A673 (cell line): ENCODE measurements at regions of chr10 and their contacts with region 1.

Region 1: DNA sequence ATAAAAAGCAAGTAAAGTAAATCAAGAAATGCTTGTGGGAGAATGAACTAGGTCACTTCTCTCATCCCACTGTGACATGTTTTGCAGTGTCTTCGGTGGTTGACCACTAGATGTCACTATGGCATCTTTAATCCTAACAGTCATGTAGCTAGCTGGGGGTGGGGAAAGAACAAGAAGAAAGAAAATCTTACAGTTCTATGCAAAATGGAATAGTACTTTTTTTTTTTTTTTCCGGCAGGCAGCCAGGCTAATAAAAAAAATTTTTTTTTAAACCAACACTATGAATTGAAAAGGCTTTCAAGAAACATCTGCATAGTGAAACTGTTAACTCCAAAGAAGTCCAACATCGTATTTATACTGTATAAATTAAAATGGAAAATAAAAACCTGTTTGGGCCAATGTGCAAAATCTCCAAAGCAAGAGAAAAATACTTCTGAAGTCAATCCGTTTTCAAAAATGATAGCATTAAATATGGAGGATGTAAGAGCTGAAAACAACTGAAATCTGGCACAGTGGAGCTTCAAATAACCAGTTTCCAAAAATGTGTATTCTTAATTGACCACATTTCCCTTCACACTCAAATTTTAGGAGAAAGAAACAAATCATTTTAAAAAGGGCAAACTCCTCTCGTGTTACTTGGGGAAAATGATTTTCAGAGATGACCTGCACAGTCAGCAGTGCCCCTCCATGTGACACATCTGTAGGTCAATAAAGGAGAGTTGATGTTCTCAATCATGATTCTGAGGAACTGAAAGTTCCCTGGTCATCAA is 38.5 kb downstream of the CDK1 start:
- DNase-seq: peak; percentile 90
- H3K4me3 ChIP-seq: no peak overlapping the region
- H3K27ac ChIP-seq: no peak overlapping the region
- H3K4me1 ChIP-seq: peaks cover 34% of the 10 kb centered on the region
- H3K27me3 ChIP-seq: no peaks in the 10 kb centered on the region
- CTCF ChIP-seq: peak; percentile 90

Region 2: DNA sequence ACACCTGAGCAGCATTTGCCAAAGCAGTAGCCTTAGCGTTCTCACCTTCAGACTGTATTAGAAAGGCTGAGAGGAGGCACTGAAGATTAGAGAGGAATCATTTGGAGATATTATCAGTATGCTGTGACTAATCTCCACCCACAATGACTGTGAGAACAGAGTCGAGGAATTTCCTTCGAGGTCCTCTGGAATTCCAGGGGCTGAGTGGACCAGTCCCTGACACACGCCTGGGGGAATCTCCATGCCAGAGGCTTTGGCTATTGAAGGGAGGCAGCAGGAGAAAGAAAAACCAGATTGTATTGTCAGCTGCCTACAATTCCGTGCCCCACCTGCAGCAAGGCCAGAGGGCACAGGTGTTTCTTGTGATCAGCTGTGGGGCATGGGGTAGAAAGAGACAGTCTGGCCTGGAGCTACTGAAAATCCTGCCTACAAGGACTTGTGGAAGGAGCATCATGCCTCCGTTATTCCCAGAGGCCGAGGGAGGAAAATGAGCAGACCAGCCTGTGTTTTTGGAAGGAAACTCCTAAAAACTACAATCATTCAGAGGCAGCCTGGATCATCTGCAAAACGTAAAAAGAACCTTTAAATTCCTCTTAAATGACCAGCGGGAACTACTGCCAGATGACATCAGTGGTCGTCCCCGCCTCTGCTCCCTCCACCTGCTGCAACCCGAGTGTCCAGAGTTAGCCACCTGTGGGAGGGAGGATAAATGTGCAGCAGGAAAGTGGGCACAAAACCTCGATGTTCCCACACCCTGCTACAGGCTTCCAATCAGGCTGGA is 401.8 kb before region 1 on chr10:
- CTCF ChIA-PET with region 1: no interaction called
- POLR2A ChIA-PET with region 1: no interaction called
- intact Hi-C with region 1: no loop called
- DNase-seq: peak; percentile 54
- H3K4me3 ChIP-seq: no peak overlapping the region
- H3K27ac ChIP-seq: no peak overlapping the region
- H3K4me1 ChIP-seq: no peaks in the 10 kb centered on the region
- H3K27me3 ChIP-seq: no peaks in the 10 kb centered on the region
- CTCF ChIP-seq: no peak

Region 3: GRCh38 chr10:60964257-60965235 is 147.7 kb after region 1 on chr10:
- CTCF ChIA-PET with region 1: no interaction called
- POLR2A ChIA-PET with region 1: no interaction called
- intact Hi-C with region 1: loop called (anchors 2 kb)
- DNase-seq: peak; percentile 90
- H3K4me3 ChIP-seq: no peak overlapping the region
- H3K27ac ChIP-seq: no peak overlapping the region
- H3K4me1 ChIP-seq: peaks cover 13% of the 10 kb centered on the region
- H3K27me3 ChIP-seq: no peaks in the 10 kb centered on the region
- CTCF ChIP-seq: peak; percentile 82

Region 4: GRCh38 chr10:61189912-61190311 is 373.1 kb after region 1 on chr10:
- CTCF ChIA-PET with region 1: no interaction called
- POLR2A ChIA-PET with region 1: no interaction called
- intact Hi-C with region 1: loop called (anchors 5 kb)
- DNase-seq: no peak
- H3K4me3 ChIP-seq: no peak overlapping the region
- H3K27ac ChIP-seq: no peak overlapping the region
- H3K4me1 ChIP-seq: no peaks in the 10 kb centered on the region
- H3K27me3 ChIP-seq: no peaks in the 10 kb centered on the region
- CTCF ChIP-seq: no peak

Region 5: GRCh38 chr10:61733358-61733940 is 916.6 kb after region 1 on chr10:
- CTCF ChIA-PET with region 1: interaction called, 3 read pairs
- POLR2A ChIA-PET with region 1: no interaction called
- intact Hi-C with region 1: loop called (anchors 5 kb)
- DNase-seq: peak; percentile 76
- H3K4me3 ChIP-seq: no peak overlapping the region
- H3K27ac ChIP-seq: no peak overlapping the region
- H3K4me1 ChIP-seq: peaks cover 11% of the 10 kb centered on the region
- H3K27me3 ChIP-seq: no peaks in the 10 kb centered on the region
- CTCF ChIP-seq: peak; percentile 77

Region 6: DNA sequence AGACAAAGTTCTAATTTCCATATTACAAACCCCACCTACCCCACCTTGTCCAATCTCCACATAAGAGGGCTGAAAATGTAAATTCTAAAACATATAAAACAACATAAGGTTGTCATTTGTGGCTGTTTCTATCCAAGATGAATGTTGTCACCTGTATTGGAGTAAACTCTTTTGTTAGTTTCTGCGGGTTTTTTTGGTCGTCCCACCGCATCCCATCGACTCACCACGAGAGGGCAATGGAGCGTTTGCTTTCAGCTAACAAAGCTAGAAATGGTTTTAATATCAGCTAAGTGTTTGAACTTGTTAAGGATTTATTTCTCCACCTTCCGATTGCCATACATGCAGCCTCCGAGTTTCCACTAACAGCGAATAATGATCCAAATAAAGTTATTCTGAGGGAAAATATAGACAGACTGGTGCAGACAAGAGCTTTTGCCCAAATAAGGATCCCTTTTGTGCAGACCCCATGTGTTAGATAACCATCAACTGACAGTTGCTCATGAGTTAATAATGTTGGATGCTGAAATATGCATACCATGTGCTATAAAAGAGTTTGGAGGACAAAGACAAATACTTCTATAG is 1221.9 kb after region 1 on chr10:
- CTCF ChIA-PET with region 1: interaction called, 3 read pairs
- POLR2A ChIA-PET with region 1: no interaction called
- intact Hi-C with region 1: loop called (anchors 5 kb)
- DNase-seq: peak; percentile 93
- H3K4me3 ChIP-seq: peak overlapping the region; percentile 5
- H3K27ac ChIP-seq: peak overlapping the region; percentile 79
- H3K4me1 ChIP-seq: peaks cover 85% of the 10 kb centered on the region
- H3K27me3 ChIP-seq: no peaks in the 10 kb centered on the region
- CTCF ChIP-seq: peak; percentile 94